ENCODE measurements at regions of chr18 and their contacts with region 1.

Region 1: DNA sequence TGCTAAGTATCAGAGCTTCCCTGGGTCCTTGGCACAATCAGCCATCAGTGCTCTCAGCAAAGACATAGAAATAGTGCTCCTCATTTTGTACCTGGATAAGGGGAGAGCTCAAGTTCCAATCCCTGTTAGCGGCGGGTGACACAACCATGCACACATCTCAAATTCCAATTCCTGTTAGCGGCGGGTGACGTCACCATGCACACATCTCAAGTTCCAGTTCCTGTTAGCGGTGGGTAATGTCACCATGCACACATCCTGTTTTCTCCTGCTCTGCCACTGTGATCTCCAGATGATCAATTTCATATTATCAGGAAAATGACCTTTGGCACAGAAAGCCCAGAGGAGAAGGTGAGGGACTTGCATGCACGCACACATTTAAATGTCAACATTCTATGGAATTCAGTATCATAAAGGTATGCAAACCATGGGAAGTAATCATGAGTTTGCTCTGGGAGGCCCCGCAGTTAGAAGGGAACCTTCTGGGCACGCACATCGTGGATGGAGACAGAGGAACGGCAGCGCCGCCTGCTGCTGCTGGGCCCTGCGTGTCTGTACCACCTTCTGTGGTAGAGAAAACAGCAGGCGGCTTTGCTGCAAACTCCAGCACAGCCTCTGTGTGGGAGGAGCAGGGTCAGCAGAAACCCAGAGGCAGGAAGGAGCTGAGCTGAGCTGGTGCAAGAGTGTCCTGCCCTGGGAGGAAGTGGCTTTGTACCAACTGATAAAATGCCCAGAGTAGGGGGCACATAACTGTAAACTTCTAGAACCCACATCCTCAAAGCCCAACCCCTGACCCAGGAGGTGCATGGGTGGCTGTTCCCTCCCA is 77.8 kb downstream of the MBP start:
- DNase-seq: peak; percentile 94
- H3K4me3 Mint-ChIP-seq: peak overlapping the region; percentile 85
- H3K27ac Mint-ChIP-seq: peak overlapping the region; percentile 100
- H3K4me1 Mint-ChIP-seq: peaks cover 52% of the 10 kb centered on the region
- H3K27me3 Mint-ChIP-seq: no peaks in the 10 kb centered on the region

Region 2: DNA sequence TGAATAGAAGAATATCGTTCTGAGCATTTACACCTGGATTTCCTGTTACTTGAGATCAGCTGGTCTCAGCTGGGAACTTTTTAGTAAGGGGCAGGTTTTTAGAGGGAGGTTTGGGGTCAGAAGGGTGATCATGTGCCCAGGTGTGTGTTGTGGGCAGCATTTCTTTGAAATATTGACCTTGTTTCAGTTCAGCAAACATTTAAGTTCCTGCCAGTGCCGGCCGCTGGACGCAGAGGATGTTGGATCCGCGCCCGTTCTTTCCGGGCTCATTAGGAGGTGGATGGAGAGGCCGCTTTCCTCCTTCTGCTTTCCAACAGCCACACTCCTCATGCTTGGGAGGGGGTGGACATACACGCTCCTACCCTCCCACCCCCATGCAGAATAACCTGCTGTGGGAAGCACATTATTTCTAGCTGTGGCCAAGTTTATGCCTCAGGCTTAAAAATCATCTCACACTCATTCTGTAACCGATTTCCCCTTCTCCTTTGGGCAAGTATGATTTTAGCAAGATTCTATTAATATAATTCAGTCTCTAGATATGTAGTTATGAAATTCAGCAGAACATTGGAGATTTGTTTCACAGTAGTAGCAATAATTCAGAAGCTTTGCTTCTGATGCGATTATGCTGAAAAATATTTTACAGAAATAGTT is 101.1 kb before region 1 on chr18:
- intact Hi-C with region 1: no loop called
- DNase-seq: no peak
- H3K4me3 Mint-ChIP-seq: no peak overlapping the region
- H3K27ac Mint-ChIP-seq: no peak overlapping the region
- H3K4me1 Mint-ChIP-seq: peaks cover 22% of the 10 kb centered on the region
- H3K27me3 Mint-ChIP-seq: no peaks in the 10 kb centered on the region

Region 3: DNA sequence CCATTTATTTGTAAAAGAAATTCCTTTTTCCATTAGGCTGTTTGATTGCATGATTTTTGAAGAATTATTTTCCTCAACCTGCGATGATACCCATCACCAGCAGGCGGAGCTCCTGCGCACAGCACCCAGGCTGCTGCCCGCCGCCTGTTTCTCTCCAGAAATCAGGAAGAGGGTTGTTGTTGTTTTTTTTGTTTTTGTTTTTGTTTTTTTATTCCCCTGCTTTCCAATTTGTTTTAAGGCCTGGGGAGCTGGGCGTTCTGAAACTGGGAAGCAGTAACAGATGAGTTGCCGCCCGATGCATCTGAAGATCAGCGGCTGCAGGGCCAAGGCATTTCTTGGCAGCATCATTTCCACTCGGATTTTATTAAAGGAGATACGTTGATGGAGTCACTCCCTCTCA is 54.3 kb before region 1 on chr18:
- intact Hi-C with region 1: loop called (anchors 1 kb)
- DNase-seq: peak; percentile 83
- H3K4me3 Mint-ChIP-seq: no peak overlapping the region
- H3K27ac Mint-ChIP-seq: no peak overlapping the region
- H3K4me1 Mint-ChIP-seq: peaks cover 31% of the 10 kb centered on the region
- H3K27me3 Mint-ChIP-seq: peaks cover 4% of the 10 kb centered on the region

Region 4: DNA sequence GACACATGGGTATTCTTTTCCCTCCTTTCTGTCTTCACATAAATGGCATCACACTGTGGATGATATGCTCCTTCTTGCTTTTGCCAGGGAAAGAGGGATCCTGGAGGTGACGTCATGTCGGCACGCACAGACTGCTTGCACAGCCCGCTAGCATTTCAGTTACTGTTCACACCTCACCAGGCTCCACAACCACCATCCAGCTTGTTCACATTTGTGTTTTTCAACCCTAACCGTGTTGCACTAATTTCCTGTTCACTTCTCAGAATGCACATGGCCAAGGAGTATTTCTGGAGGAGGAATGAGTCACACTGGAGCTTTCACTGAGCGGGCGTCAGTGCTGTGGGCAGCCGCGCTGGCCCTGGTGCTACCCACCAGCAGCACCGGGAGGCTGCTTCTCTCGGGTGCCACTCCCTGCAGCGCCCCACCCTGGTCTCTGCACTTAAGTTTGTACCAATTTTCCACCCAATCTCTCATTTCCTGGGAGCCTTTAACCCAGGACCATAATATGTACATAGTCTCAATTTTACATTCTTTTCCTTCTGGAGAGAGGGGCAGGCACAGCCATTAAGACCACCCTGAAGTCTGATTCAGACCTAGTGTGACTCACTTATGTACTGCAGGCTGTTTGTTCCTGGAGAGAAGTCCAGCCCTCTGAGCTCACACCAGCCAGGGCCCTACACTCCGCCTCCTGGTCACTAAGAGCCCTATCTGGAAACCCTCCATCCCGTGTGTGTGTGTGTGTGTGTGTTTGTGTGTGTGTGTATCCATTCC is 12.7 kb after region 1 on chr18:
- intact Hi-C with region 1: loop called (anchors 1 kb)
- DNase-seq: peak; percentile 91
- H3K4me3 Mint-ChIP-seq: peak overlapping the region; percentile 66
- H3K27ac Mint-ChIP-seq: peak overlapping the region; percentile 97
- H3K4me1 Mint-ChIP-seq: peaks cover 99% of the 10 kb centered on the region
- H3K27me3 Mint-ChIP-seq: no peaks in the 10 kb centered on the region

Region 5: DNA sequence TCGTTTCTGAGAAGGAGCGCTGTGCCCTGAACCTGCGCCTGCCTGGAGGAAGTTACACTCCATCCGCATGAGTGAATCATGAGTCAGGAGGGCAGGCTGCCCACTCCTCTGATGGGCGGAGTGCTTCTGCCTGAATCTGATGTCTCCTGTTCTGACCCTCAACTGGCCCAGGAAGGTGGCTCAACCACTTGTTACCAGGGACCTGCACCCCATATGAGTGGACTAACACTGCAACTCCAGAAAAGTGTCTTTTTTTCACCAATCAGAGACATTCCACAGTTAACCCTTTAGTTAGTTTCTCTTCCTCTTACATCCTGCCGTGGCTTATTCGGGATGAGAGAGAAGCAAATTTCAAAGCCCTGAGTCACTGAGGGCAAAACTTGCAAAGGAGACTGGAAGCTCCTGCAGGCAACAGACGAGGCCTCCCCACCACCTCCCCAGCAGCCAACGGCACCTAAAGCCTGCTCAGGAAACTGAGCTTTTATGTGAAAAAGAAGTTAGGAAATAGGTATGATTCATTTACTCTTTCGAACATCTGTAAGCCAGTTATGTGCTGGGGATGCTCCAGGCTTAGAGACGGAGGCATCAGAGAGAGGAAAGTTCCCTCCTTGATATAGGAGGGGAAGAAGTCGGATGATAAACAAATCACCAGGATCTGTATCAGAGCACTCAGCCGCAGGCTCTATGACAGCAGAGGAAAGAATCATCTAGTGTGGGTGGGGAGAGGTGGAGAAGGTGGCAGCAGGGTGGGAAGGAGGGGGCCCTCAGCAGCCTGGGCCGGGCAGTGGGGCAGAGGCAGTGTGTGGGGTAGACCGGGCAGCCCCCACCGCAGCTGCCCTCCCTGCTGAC is 46.8 kb after region 1 on chr18:
- intact Hi-C with region 1: no loop called
- DNase-seq: peak; percentile 82
- H3K4me3 Mint-ChIP-seq: peak overlapping the region; percentile 83
- H3K27ac Mint-ChIP-seq: peak overlapping the region; percentile 97
- H3K4me1 Mint-ChIP-seq: peaks cover 88% of the 10 kb centered on the region
- H3K27me3 Mint-ChIP-seq: no peaks in the 10 kb centered on the region

Region 6: GRCh38 chr18:77737412-77737811 is 682.6 kb after region 1 on chr18:
- intact Hi-C with region 1: no loop called
- DNase-seq: no peak
- H3K4me3 Mint-ChIP-seq: no peak overlapping the region
- H3K27ac Mint-ChIP-seq: no peak overlapping the region
- H3K4me1 Mint-ChIP-seq: no peaks in the 10 kb centered on the region
- H3K27me3 Mint-ChIP-seq: no peaks in the 10 kb centered on the region